ENCODE measurements at regions of chr1 and their contacts with region 1.

Region 1: GRCh38 chr1:16613185-16614147 is at the start of gene NBPF1:
- DNase-seq: peak; percentile 95 to 100 (median 97)
- ATAC-seq: peak; percentile 98 to 99 (median 99)
- H3K4me3 ChIP-seq: peak within 1 kb of the TSS; percentile 48 to 85 (median 61)
- H3K27ac ChIP-seq: peak within 1 kb of the TSS; percentile 23 to 86 (median 80)
- H3K4me1 ChIP-seq: peaks cover 3 to 21% (median 17%) of the 10 kb centered on the region in 12 donors
- H3K27me3 ChIP-seq: peaks cover 0 to 12% (median 0%) of the 10 kb centered on the region in 9 donors
- CTCF ChIP-seq: peak in 3 of 12 donors; percentile 3 to 52 (median 9)
- POLR2A ChIP-seq: peak in 1 of 2 donors; percentile 99
- total RNA-seq, gene NBPF1: 4.7 to 18.2 (median 14.3) TPM

Region 2: GRCh38 chr1:16644193-16644481 is 30.7 kb after region 1 on chr1:
- intact Hi-C with region 1: loop called in 3 of 10 experiments (anchors 1 to 2 kb)
- DNase-seq: no peak
- ATAC-seq: peak in 2 of 4 donors; percentile 25 to 38
- H3K4me3 ChIP-seq: peak overlapping the region; percentile 46 to 95 (median 72)
- H3K27ac ChIP-seq: peak overlapping the region; percentile 33 to 92 (median 80)
- H3K4me1 ChIP-seq: peaks cover 6 to 45% (median 30%) of the 10 kb centered on the region in 12 donors
- H3K27me3 ChIP-seq: peaks cover 0 to 12% (median 0%) of the 10 kb centered on the region in 9 donors
- CTCF ChIP-seq: no peak
- POLR2A ChIP-seq: no peak

Region 3: GRCh38 chr1:17011439-17012307 is 398.2 kb after region 1 on chr1 and contains the start of gene ATP13A2:
- intact Hi-C with region 1: no loop called
- DNase-seq: peak; percentile 79 to 91 (median 81)
- ATAC-seq: peak; percentile 89 to 95 (median 92)
- H3K4me3 ChIP-seq: peak within 1 kb of the TSS; percentile 67 to 98 (median 85)
- H3K27ac ChIP-seq: peak within 1 kb of the TSS in 11 of 12 donors; percentile 42 to 79 (median 60)
- H3K4me1 ChIP-seq: peaks cover 0 to 43% (median 23%) of the 10 kb centered on the region in 12 donors
- H3K27me3 ChIP-seq: no peaks in the 10 kb centered on the region
- CTCF ChIP-seq: no peak
- POLR2A ChIP-seq: peak in 1 of 2 donors; percentile 50
- total RNA-seq, gene ATP13A2: 7.3 to 37.2 (median 15.6) TPM

Region 4: GRCh38 chr1:17023102-17023501 is 409.6 kb after region 1 on chr1:
- intact Hi-C with region 1: no loop called
- DNase-seq: no peak
- ATAC-seq: no peak
- H3K4me3 ChIP-seq: no peak overlapping the region
- H3K27ac ChIP-seq: no peak overlapping the region
- H3K4me1 ChIP-seq: peaks cover 0 to 30% (median 0%) of the 10 kb centered on the region in 12 donors
- H3K27me3 ChIP-seq: no peaks in the 10 kb centered on the region
- CTCF ChIP-seq: no peak
- POLR2A ChIP-seq: no peak

Measured in heart left ventricle (tissue), 16 donors.